ENCODE measurements at regions of chr16 and their contacts with region 1.

Region 1: GRCh38 chr16:74726716-74727115 is 26.1 kb upstream of the MLKL start:
- DNase-seq: peak; percentile 80
- ATAC-seq: peak; percentile 51
- H3K4me3 Mint-ChIP-seq: no peak overlapping the region
- H3K27ac Mint-ChIP-seq: no peak overlapping the region
- H3K4me1 Mint-ChIP-seq: peaks cover 25% of the 10 kb centered on the region
- H3K27me3 Mint-ChIP-seq: no peaks in the 10 kb centered on the region
- CTCF ChIP-seq: peak; percentile 54; the same call in 1 of the 2 replicates

Region 2: GRCh38 chr16:74627506-74628220 is 99.1 kb before region 1 on chr16:
- CTCF ChIA-PET with region 1: no interaction called
- POLR2A ChIA-PET with region 1: no interaction called
- DNase-seq: no peak
- ATAC-seq: no peak
- H3K4me3 Mint-ChIP-seq: no peak overlapping the region
- H3K27ac Mint-ChIP-seq: no peak overlapping the region
- H3K4me1 Mint-ChIP-seq: peaks cover 5% of the 10 kb centered on the region
- H3K27me3 Mint-ChIP-seq: no peaks in the 10 kb centered on the region
- CTCF ChIP-seq: no peak

Region 3: DNA sequence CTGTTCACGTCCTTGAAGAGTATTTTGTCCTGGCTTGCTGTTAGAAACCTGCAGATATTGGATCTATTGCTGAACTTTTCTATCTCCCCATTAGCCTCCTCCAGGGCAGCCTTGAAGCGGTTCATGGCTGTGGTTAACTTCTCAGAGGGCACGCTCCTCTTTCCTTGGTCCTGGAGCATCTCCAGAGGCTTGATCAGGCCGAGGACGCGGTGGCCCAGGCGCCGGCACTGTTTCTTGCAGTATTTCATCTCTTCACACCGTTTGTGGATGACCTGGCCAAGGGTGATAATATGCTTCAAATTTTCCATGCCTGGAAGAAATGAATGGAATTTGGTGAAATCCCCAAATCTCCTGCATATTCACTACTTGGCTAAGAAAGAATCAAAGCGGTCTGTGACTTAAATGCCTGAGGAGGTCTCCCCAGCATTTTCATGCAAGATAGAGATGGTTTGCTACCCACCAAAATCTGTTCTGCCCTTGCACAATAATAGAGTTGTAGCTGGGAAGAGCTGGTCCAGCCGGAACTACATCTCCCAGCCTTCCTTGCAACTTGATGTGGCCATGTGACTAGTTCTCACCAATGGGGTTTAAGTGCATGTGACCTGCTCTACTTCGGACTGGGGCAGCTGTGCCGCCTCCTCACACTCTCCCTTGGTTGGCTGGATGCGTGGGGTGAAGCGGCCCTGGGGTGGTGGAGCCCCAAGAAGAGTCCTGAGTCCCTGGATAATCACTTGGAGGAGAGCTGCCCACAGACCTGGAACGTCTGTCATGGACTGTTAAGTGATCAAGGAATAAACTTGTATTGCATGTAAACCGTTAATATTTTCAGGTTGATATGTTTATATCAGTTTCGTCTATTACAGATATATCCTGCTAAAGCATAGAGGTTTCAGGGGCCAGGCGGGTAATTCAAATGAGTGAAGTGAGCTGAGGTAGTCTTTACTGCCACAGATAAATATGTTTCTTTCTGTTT is 31.0 kb before region 1 on chr16:
- CTCF ChIA-PET with region 1: interaction called, 16 read pairs
- POLR2A ChIA-PET with region 1: no interaction called
- DNase-seq: peak; percentile 72
- ATAC-seq: peak; percentile 95
- H3K4me3 Mint-ChIP-seq: peak overlapping the region; percentile 76
- H3K27ac Mint-ChIP-seq: no peak overlapping the region
- H3K4me1 Mint-ChIP-seq: peaks cover 13% of the 10 kb centered on the region
- H3K27me3 Mint-ChIP-seq: peaks cover 23% of the 10 kb centered on the region
- CTCF ChIP-seq: no peak

Region 4: DNA sequence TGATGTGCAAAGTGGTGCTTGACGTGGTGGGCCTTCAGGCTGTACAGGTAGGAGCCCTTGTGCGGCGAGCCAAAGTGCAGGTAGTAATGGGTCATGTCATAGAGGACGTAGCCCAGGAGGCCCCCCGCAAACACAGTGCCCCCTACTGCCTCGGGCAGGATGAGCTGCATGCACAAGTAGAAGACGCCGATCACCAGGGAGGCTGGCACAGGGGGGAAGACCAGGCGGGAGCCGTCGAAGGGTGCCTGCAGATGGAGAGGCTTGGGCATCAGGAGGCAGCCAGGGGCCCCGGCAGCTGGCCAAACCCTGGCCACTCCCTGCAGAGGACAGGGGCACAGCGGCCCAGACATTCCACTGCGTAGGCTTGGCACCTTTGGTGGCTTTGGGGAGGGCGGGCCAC is 10.4 kb before region 1 on chr16:
- CTCF ChIA-PET with region 1: interaction called, 63 read pairs
- POLR2A ChIA-PET with region 1: no interaction called
- DNase-seq: peak; percentile 44
- ATAC-seq: peak; percentile 47
- H3K4me3 Mint-ChIP-seq: no peak overlapping the region
- H3K27ac Mint-ChIP-seq: no peak overlapping the region
- H3K4me1 Mint-ChIP-seq: no peaks in the 10 kb centered on the region
- H3K27me3 Mint-ChIP-seq: no peaks in the 10 kb centered on the region
- CTCF ChIP-seq: no peak

Region 5: GRCh38 chr16:74774203-74775116 is 47.7 kb after region 1 on chr16 and contains the start of gene FA2H:
- CTCF ChIA-PET with region 1: interaction called, 16 read pairs
- POLR2A ChIA-PET with region 1: no interaction called
- DNase-seq: peak; percentile 88
- ATAC-seq: peak; percentile 94
- H3K4me3 Mint-ChIP-seq: peak within 1 kb of the TSS; percentile 84
- H3K27ac Mint-ChIP-seq: peak within 1 kb of the TSS; percentile 80; the same call in 1 of the 2 replicates
- H3K4me1 Mint-ChIP-seq: peaks cover 16% of the 10 kb centered on the region
- H3K27me3 Mint-ChIP-seq: peaks cover 31% of the 10 kb centered on the region
- CTCF ChIP-seq: no peak
- total RNA-seq, gene FA2H: 6.0 to 10.9 TPM (median 6.6 TPM) in 3 replicates

Region 6: DNA sequence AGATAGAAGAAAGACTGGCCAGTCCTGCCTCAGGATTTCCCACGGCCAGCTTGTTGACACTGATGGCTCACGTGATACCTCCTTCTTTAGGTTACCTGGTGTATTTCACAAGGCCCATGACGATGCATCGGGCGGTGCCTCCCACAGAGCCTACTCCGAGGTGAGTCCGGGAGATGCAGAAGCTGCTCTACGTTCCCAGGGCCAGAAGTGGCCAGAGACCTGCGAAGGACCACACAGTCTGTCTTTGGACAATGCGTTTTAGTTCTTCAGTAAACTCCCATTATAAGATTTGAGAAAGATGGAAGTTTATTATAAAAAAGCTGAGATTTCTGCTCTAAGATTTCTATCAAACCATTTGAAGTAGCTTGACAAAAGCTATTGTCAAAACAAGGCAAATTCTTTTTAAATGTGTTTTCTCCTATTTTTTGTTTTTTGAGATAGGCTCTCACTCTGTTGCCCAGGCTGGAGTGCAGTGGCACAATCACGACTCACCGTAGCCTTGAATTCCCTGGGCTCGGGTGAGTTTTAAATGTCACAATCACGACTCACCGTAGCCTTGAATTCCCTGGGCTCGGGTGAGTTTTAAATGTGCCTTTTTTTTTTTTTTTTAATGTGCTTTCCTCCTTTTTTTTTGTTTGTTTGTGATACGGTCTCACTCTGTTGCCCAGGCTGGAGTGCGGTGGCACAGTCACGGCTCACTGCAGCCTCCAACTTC is 117.2 kb after region 1 on chr16:
- CTCF ChIA-PET with region 1: no interaction called
- POLR2A ChIA-PET with region 1: no interaction called
- DNase-seq: no peak
- ATAC-seq: no peak
- H3K4me3 Mint-ChIP-seq: no peak overlapping the region
- H3K27ac Mint-ChIP-seq: peak overlapping the region; percentile 86
- H3K4me1 Mint-ChIP-seq: peaks cover 3% of the 10 kb centered on the region
- H3K27me3 Mint-ChIP-seq: no peaks in the 10 kb centered on the region
- CTCF ChIP-seq: no peak